ENCODE measurements at regions of chr4 and their contacts with region 1.

Region 1: DNA sequence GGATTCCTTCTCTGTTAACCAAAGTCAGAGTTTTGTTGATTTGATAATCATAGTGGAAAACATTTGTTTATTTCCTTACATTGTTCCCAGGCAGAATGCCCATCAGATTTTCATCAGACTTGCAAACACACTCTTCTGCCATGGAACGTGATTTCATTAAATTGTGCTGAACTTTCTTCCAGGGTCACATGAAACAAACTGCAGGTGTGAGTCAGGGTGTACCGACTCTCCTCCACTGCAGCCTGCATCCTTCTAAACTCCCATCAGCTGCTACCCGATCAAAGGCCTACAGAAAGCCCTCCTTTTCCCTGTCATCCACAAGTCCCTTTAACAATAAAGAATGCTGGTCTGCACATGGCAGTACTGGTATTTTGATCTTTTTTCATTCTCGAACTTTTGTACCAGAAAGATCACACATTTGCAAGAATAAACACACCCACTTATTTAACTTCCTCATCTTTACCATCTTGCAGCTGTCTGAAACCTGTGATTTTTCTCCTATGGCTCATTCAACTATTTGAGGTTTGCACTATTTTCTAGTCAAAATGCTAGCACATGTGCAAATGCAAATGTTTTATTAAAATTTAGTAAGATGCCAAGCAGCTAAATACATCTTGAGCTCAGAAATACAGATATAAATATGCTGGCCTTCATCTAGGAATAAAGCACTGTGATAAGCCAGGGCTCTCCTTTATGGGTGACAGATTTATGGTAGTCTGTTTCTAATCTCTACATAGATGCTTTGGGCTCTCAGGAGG is 25.9 kb upstream of the ARHGAP24 start:
- DNase-seq: peak; percentile 44
- ATAC-seq: peak; percentile 73
- H3K4me3 ChIP-seq: peak overlapping the region in 3 of 5 experiments; percentile 13 to 31 (median 27)
- H3K4me3 Mint-ChIP-seq: peak overlapping the region; percentile 78
- H3K27ac ChIP-seq: no peak overlapping the region
- H3K27ac Mint-ChIP-seq: peak overlapping the region; percentile 50
- H3K4me1 ChIP-seq: peaks cover 24 to 27% of the 10 kb centered on the region in 2 donors
- H3K4me1 Mint-ChIP-seq: peaks cover 27% of the 10 kb centered on the region
- H3K27me3 ChIP-seq: no peaks in the 10 kb centered on the region
- H3K27me3 Mint-ChIP-seq: no peaks in the 10 kb centered on the region
- CTCF ChIP-seq: no peak

Region 2: GRCh38 chr4:85078016-85078415 is 371.0 kb before region 1 on chr4:
- CTCF ChIA-PET with region 1: no interaction called
- POLR2A ChIA-PET with region 1: no interaction called
- intact Hi-C with region 1: no loop called
- DNase-seq: no peak
- ATAC-seq: no peak
- H3K4me3 ChIP-seq: no peak overlapping the region
- H3K4me3 Mint-ChIP-seq: no peak overlapping the region
- H3K27ac ChIP-seq: no peak overlapping the region
- H3K27ac Mint-ChIP-seq: no peak overlapping the region
- H3K4me1 ChIP-seq: no peaks in the 10 kb centered on the region
- H3K4me1 Mint-ChIP-seq: peaks cover 6% of the 10 kb centered on the region
- H3K27me3 ChIP-seq: peaks cover 0 to 10% (median 4%) of the 10 kb centered on the region in 4 experiments
- H3K27me3 Mint-ChIP-seq: peaks cover 20% of the 10 kb centered on the region
- CTCF ChIP-seq: no peak

Region 3: DNA sequence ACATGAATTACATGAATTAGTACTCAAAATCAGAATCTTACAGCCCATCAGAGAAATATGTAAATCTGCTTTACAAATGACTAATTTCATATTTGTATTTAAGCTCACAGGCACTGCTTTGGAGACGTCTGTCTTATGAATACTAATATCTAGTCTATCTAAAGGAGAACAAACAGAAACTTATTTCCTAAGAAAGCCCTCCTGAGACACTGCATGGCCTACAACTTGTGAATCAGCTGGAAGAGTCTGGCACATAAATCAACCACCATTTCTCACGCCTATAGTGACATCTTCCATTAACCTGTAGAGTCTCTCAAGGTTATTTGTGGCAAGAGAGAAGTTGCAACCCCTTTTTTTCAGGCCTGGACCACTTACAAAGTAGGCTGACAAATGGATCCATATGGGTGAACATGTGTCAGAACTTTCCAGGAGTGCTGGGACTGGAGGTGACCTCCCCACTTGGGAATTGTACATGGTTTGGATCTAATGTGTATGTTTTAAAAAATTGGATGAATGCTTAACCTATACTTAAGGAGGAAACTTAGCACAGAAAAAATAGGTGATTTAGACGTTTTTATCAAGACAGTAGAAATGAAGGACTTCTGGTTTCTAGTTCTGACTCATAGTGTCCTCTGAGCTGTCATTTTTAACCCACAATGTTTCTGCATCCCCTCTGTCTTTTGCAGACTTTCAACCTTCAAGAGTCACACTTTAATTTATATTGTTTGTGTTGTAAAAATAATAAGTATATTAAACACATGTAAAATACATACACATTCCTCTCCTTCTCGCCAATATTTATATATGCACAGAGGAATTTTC is 57.2 kb before region 1 on chr4:
- CTCF ChIA-PET with region 1: no interaction called
- POLR2A ChIA-PET with region 1: no interaction called
- intact Hi-C with region 1: loop called (anchors 5 kb)
- DNase-seq: no peak
- ATAC-seq: peak; percentile 58
- H3K4me3 ChIP-seq: no peak overlapping the region
- H3K4me3 Mint-ChIP-seq: peak overlapping the region; percentile 30
- H3K27ac ChIP-seq: no peak overlapping the region
- H3K27ac Mint-ChIP-seq: peak overlapping the region; percentile 80
- H3K4me1 ChIP-seq: peaks cover 30 to 37% of the 10 kb centered on the region in 2 donors
- H3K4me1 Mint-ChIP-seq: peaks cover 28% of the 10 kb centered on the region
- H3K27me3 ChIP-seq: no peaks in the 10 kb centered on the region
- H3K27me3 Mint-ChIP-seq: no peaks in the 10 kb centered on the region
- CTCF ChIP-seq: no peak